Naive thymus-derived CD4-positive, alpha-beta T cell (primary cell): ENCODE measurements at regions of chr2 and their contacts with region 1.

Region 1: GRCh38 chr2:54558188-54559005 is 102.3 kb downstream of the SPTBN1 start:
- DNase-seq: peak; percentile 48 to 75 (median 64)
- ATAC-seq: peak; percentile 82
- H3K4me3 ChIP-seq: peak overlapping the region; percentile 94
- H3K4me3 Mint-ChIP-seq: peak overlapping the region; percentile 86 to 100 (median 98)
- H3K27ac ChIP-seq: peak overlapping the region; percentile 86
- H3K27ac Mint-ChIP-seq: peak overlapping the region; percentile 90 to 98 (median 96)
- H3K4me1 ChIP-seq: peaks cover 10 to 11% of the 10 kb centered on the region in 2 donors
- H3K4me1 Mint-ChIP-seq: peaks cover 29 to 65% (median 59%) of the 10 kb centered on the region in 7 donors
- H3K27me3 ChIP-seq: no peaks in the 10 kb centered on the region
- H3K27me3 Mint-ChIP-seq: no peaks in the 10 kb centered on the region

Region 2: GRCh38 chr2:52695731-52696130 is 1862.7 kb before region 1 on chr2:
- CTCF ChIA-PET with region 1: no interaction called
- POLR2A ChIA-PET with region 1: no interaction called
- intact Hi-C with region 1: no loop called
- DNase-seq: no peak
- ATAC-seq: no peak
- H3K4me3 ChIP-seq: no peak overlapping the region
- H3K4me3 Mint-ChIP-seq: no peak overlapping the region
- H3K27ac ChIP-seq: no peak overlapping the region
- H3K27ac Mint-ChIP-seq: no peak overlapping the region
- H3K4me1 ChIP-seq: no peaks in the 10 kb centered on the region
- H3K4me1 Mint-ChIP-seq: no peaks in the 10 kb centered on the region
- H3K27me3 ChIP-seq: no peaks in the 10 kb centered on the region
- H3K27me3 Mint-ChIP-seq: no peaks in the 10 kb centered on the region

Region 3: GRCh38 chr2:53786705-53787612 is 771.4 kb before region 1 on chr2 and contains the starts of genes ASB3 and ERLEC1:
- CTCF ChIA-PET with region 1: no interaction called
- POLR2A ChIA-PET with region 1: no interaction called
- intact Hi-C with region 1: loop called in 1 of 2 experiments (anchors 5 kb)
- DNase-seq: peak; percentile 69 to 87 (median 83)
- ATAC-seq: peak; percentile 95
- H3K4me3 ChIP-seq: peak within 1 kb of the TSS; percentile 66
- H3K4me3 Mint-ChIP-seq: peak within 1 kb of the TSS; percentile 88 to 99 (median 98)
- H3K27ac ChIP-seq: peak within 1 kb of the TSS; percentile 82
- H3K27ac Mint-ChIP-seq: peak within 1 kb of the TSS; percentile 81 to 99 (median 96)
- H3K4me1 ChIP-seq: peaks cover 14 to 16% of the 10 kb centered on the region in 2 donors
- H3K4me1 Mint-ChIP-seq: peaks cover 37 to 79% (median 67%) of the 10 kb centered on the region in 7 donors
- H3K27me3 ChIP-seq: no peaks in the 10 kb centered on the region
- H3K27me3 Mint-ChIP-seq: no peaks in the 10 kb centered on the region
- total RNA-seq, gene ASB3: 24.9 to 43.2 (median 34.5) TPM
- total RNA-seq, gene ERLEC1: 13.3 to 30.1 (median 26.3) TPM

Region 4: GRCh38 chr2:54589340-54590215 is 31.2 kb after region 1 on chr2:
- CTCF ChIA-PET with region 1: interaction called, 11 read pairs
- POLR2A ChIA-PET with region 1: interaction called, 154 read pairs
- intact Hi-C with region 1: loop called (anchors 1 kb)
- DNase-seq: peak in 6 of 9 donors; percentile 50 to 75 (median 58)
- ATAC-seq: peak; percentile 69
- H3K4me3 ChIP-seq: peak overlapping the region; percentile 34
- H3K4me3 Mint-ChIP-seq: peak overlapping the region; percentile 56 to 93 (median 82)
- H3K27ac ChIP-seq: peak overlapping the region; percentile 70
- H3K27ac Mint-ChIP-seq: peak overlapping the region; percentile 82 to 98 (median 96)
- H3K4me1 ChIP-seq: peaks cover 63 to 89% of the 10 kb centered on the region in 2 donors
- H3K4me1 Mint-ChIP-seq: peaks cover 60 to 100% (median 95%) of the 10 kb centered on the region in 7 donors
- H3K27me3 ChIP-seq: no peaks in the 10 kb centered on the region
- H3K27me3 Mint-ChIP-seq: no peaks in the 10 kb centered on the region

Region 5: DNA sequence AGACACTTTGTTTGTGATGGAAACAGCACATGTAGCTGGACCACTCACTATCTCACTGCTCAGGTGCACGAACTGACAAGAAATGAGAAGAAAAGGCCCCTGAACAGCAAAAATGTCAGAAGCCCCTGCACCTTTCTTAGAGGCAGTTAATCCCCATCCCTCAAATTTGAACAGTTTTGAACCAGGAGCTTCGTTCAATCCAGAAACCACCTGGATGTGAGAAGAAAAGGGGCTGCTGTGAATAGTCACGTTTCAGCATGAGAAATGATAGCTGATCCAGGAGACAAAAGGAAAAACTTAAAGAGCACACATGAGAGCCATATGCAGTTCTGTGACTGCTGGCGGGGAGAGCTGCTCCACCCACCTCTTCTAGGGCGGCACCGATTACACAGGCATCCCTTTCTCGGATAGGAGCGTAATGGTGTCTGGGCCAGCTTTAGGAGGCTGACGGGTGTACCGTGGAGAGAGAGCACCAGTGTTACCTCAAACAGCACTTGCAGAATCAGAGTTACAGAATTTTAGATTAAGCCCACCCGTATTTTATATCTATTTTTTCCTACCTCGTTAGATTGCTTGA is 48.1 kb after region 1 on chr2:
- CTCF ChIA-PET with region 1: interaction called, 28 read pairs
- POLR2A ChIA-PET with region 1: interaction called, 154 read pairs
- intact Hi-C with region 1: loop called (anchors 1 to 2 kb)
- DNase-seq: peak in 6 of 9 donors; percentile 47 to 72 (median 58)
- ATAC-seq: peak; percentile 86
- H3K4me3 ChIP-seq: peak overlapping the region; percentile 1
- H3K4me3 Mint-ChIP-seq: peak overlapping the region; percentile 61 to 93 (median 74)
- H3K27ac ChIP-seq: peak overlapping the region; percentile 74
- H3K27ac Mint-ChIP-seq: peak overlapping the region; percentile 74 to 98 (median 96)
- H3K4me1 ChIP-seq: peaks cover 18 to 68% of the 10 kb centered on the region in 2 donors
- H3K4me1 Mint-ChIP-seq: peaks cover 79 to 94% (median 91%) of the 10 kb centered on the region in 7 donors
- H3K27me3 ChIP-seq: no peaks in the 10 kb centered on the region
- H3K27me3 Mint-ChIP-seq: no peaks in the 10 kb centered on the region

Region 6: DNA sequence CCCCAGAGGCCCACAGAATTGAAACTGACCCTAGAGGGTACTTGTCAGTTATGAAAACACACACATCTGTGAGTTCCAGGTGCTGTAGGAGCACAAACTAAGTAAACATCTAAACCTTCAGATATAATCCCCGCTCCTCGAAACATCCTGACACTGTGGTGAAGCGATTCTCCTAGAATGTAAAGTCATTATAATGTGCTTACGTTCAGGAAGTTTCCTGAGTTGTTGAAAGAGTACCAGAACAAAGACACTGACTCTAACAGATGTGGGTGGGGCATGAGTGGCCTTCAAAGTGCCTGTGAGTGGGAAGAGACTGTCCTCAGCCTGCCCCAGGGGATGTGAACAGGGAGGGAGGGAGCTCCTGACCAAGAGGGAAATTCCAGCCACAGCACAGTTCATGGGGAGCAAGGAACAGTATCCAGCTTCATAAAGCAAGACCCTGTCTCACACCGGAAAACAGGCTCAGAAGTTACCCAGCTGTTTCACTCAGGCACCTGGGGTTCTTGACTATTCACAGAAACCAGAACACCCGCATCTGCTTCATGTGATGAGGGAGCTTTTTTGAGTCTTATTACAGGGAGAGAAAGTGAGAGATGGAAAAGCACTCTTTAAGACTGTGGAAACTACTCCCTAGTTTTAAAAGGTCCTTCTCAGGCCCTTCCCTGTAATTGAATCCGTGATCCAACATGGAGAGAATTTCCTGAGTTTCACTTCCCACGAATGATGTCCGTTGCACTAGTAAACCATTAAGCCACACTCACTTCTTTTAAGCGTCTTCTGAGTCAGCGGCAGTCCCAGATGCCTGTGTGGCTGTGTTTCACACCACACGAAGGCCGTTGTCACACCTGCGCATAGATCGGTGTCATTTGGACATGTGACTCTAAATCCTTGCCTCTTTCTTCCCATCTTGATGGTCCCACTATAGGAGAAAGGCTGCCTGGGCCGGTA is 76.4 kb after region 1 on chr2:
- CTCF ChIA-PET with region 1: interaction called, 11 read pairs
- POLR2A ChIA-PET with region 1: interaction called, 5 read pairs
- intact Hi-C with region 1: loop called (anchors 1 to 2 kb)
- DNase-seq: peak in 7 of 9 donors; percentile 20 to 55 (median 43)
- ATAC-seq: peak; percentile 84
- H3K4me3 ChIP-seq: no peak overlapping the region
- H3K4me3 Mint-ChIP-seq: peak overlapping the region; percentile 3 to 63 (median 48)
- H3K27ac ChIP-seq: peak overlapping the region; percentile 45
- H3K27ac Mint-ChIP-seq: peak overlapping the region; percentile 74 to 93 (median 88)
- H3K4me1 ChIP-seq: peaks cover 0 to 16% of the 10 kb centered on the region in 2 donors
- H3K4me1 Mint-ChIP-seq: peaks cover 25 to 76% (median 57%) of the 10 kb centered on the region in 7 donors
- H3K27me3 ChIP-seq: no peaks in the 10 kb centered on the region
- H3K27me3 Mint-ChIP-seq: no peaks in the 10 kb centered on the region